ENCODE measurements at regions of chr19 and their contacts with region 1.

Region 1: GRCh38 chr19:42028304-42029216 is 34.5 kb upstream of the ATP1A3 start:
- H3K4me3 ChIP-seq: no peak overlapping the region
- H3K27ac ChIP-seq: no peak overlapping the region
- H3K4me1 ChIP-seq: peaks cover 18% of the 10 kb centered on the region
- CTCF ChIP-seq: peak; percentile 94

Region 2: GRCh38 chr19:41714598-41714997 is 314.0 kb before region 1 on chr19:
- CTCF ChIA-PET with region 1: no interaction called
- POLR2A ChIA-PET with region 1: no interaction called
- H3K4me3 ChIP-seq: no peak overlapping the region
- H3K27ac ChIP-seq: no peak overlapping the region
- H3K4me1 ChIP-seq: no peaks in the 10 kb centered on the region
- CTCF ChIP-seq: no peak

Region 3: GRCh38 chr19:41998246-41999020 is 30.1 kb before region 1 on chr19:
- CTCF ChIA-PET with region 1: interaction called, 28 read pairs
- POLR2A ChIA-PET with region 1: interaction called, 3 read pairs
- H3K4me3 ChIP-seq: no peak overlapping the region; the same call in 1 of the 2 replicates
- H3K27ac ChIP-seq: no peak overlapping the region
- H3K4me1 ChIP-seq: peaks cover 6% of the 10 kb centered on the region
- CTCF ChIP-seq: peak; percentile 90

Region 4: DNA sequence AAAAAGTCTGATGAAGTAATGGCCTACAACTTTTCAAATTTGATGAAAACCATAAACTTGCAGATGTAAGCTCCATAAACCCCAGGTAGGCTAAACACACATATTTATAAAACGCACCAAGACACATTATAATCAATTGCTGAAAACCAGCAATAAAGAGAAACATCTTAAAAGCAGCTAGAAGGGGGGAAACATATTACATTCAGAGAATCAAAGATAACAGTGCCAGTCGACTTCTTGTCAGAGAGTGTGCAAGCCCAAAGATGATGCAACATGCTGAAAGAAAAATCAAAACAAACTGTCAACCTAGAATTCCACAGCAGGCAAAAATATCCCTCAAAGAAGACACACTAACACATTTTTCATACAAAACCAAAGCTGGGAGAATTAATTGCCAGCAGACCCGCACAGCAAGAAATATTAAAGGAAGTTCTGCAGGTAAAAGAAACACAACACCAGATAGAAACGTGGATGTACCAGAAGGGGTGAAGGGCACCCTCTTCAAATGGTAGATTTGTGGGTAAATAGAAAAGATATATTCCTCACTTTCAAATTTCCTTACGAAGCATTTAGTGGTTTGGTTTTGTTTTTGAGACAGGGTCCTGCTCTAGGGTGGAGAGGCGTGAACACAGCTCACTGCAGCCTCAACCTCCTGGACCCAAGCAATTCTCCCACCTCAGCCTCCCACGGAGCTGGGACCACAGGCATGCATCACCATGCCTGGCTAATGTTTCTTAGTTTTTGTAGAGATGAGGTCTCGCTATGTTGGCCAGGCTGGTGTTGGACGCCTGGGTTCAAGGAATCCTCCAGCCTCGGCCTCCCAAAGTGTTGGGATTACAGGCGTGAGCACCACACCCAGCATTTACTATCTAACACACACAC is 18.1 kb before region 1 on chr19:
- CTCF ChIA-PET with region 1: interaction called, 78 read pairs
- POLR2A ChIA-PET with region 1: no interaction called
- H3K4me3 ChIP-seq: no peak overlapping the region
- H3K27ac ChIP-seq: peak overlapping the region; percentile 52
- H3K4me1 ChIP-seq: peaks cover 3% of the 10 kb centered on the region; the same call in 1 of the 2 replicates
- CTCF ChIP-seq: no peak

Region 5: GRCh38 chr19:42038666-42039065 is 10.1 kb after region 1 on chr19:
- CTCF ChIA-PET with region 1: interaction called, 57 read pairs
- POLR2A ChIA-PET with region 1: interaction called, 3 read pairs
- H3K4me3 ChIP-seq: no peak overlapping the region
- H3K27ac ChIP-seq: no peak overlapping the region
- H3K4me1 ChIP-seq: peaks cover 10% of the 10 kb centered on the region
- CTCF ChIP-seq: no peak

Region 6: DNA sequence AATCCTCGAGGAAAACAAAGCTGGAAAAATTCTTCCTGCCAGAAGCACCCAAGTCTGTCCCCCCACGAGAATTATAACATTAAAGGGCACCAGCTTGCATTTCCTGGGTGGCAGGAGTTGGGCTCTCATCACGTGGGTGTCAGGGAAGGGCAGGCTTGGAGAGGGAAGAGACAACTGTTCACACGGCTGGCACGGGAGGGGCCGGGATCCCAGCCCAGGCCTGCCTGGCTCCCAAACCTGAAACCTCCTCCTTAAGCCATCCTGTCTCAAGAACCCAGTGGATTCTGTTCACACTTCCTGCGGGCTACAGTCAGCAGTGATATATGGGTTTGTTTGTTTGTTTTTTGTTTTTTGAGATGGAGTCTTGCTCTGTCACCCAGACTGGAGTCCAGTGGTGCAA is 29.3 kb after region 1 on chr19:
- CTCF ChIA-PET with region 1: interaction called, 15 read pairs
- POLR2A ChIA-PET with region 1: no interaction called
- H3K4me3 ChIP-seq: no peak overlapping the region
- H3K27ac ChIP-seq: no peak overlapping the region
- H3K4me1 ChIP-seq: no peaks in the 10 kb centered on the region
- CTCF ChIP-seq: no peak

Region 7: GRCh38 chr19:42352301-42353259 is 324.0 kb after region 1 on chr19:
- CTCF ChIA-PET with region 1: no interaction called
- POLR2A ChIA-PET with region 1: no interaction called
- H3K4me3 ChIP-seq: no peak overlapping the region
- H3K27ac ChIP-seq: no peak overlapping the region
- H3K4me1 ChIP-seq: no peaks in the 10 kb centered on the region
- CTCF ChIP-seq: no peak

Measured in HEK293 (cell line).